ENCODE measurements at regions of chr7 and their contacts with region 1.

Region 1: GRCh38 chr7:121337398-121337797 is 8.6 kb downstream of the WNT16 start:
- DNase-seq: peak; percentile 50
- ATAC-seq: peak; percentile 65
- H3K4me3 ChIP-seq: no peak overlapping the region
- H3K4me3 Mint-ChIP-seq: no peak overlapping the region
- H3K27ac ChIP-seq: peak overlapping the region in 1 of 2 donors; percentile 24
- H3K27ac Mint-ChIP-seq: peak overlapping the region; percentile 46
- H3K4me1 ChIP-seq: no peaks in the 10 kb centered on the region
- H3K4me1 Mint-ChIP-seq: peaks cover 18% of the 10 kb centered on the region
- H3K27me3 ChIP-seq: no peaks in the 10 kb centered on the region
- H3K27me3 Mint-ChIP-seq: no peaks in the 10 kb centered on the region
- CTCF ChIP-seq: peak; percentile 35

Region 2: GRCh38 chr7:121107923-121108498 is 229.4 kb before region 1 on chr7:
- CTCF ChIA-PET with region 1: interaction called, 12 read pairs
- POLR2A ChIA-PET with region 1: no interaction called
- intact Hi-C with region 1: no loop called
- DNase-seq: peak; percentile 67
- ATAC-seq: peak; percentile 78
- H3K4me3 ChIP-seq: no peak overlapping the region
- H3K4me3 Mint-ChIP-seq: no peak overlapping the region
- H3K27ac ChIP-seq: no peak overlapping the region
- H3K27ac Mint-ChIP-seq: no peak overlapping the region
- H3K4me1 ChIP-seq: no peaks in the 10 kb centered on the region
- H3K4me1 Mint-ChIP-seq: no peaks in the 10 kb centered on the region
- H3K27me3 ChIP-seq: no peaks in the 10 kb centered on the region
- H3K27me3 Mint-ChIP-seq: no peaks in the 10 kb centered on the region
- CTCF ChIP-seq: peak; percentile 98

Region 3: DNA sequence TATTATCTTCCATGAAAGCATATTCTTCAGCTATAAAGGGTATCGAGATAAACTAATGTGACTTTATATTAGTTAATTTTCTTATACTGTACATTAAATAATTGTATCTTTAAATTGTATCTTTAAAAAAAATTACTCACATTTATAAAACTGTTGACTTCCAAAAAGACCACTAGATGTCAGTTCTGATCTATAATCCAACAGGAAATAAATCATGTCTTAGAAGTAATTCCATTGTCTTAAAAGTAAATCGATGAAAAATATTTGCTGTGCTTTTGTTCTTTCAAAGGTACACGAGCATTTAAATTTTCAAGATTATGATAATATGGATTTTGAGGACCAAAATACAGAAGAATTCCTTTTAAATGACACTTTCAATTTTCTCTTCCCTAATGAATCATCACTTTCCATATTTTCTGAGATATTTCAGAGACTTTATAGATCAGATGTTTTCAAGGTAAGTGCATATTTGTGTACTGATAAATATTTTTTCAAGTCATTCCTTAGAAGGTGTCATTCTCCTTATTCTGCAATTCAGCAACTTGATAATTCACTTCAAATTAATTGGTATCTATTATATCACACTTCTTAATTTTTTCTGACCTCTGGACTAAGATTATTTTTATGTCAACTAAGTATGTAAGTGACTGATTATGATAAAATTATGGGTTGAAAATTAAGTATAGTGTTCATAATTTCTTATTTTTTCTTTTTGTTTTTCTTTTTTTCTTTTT is 210.4 kb before region 1 on chr7:
- CTCF ChIA-PET with region 1: interaction called, 22 read pairs
- POLR2A ChIA-PET with region 1: no interaction called
- intact Hi-C with region 1: loop called (anchors 1 kb)
- DNase-seq: peak; percentile 51
- ATAC-seq: no peak
- H3K4me3 ChIP-seq: no peak overlapping the region
- H3K4me3 Mint-ChIP-seq: no peak overlapping the region
- H3K27ac ChIP-seq: no peak overlapping the region
- H3K27ac Mint-ChIP-seq: no peak overlapping the region
- H3K4me1 ChIP-seq: peaks cover 0 to 15% of the 10 kb centered on the region in 2 donors
- H3K4me1 Mint-ChIP-seq: peaks cover 9% of the 10 kb centered on the region
- H3K27me3 ChIP-seq: no peaks in the 10 kb centered on the region
- H3K27me3 Mint-ChIP-seq: no peaks in the 10 kb centered on the region
- CTCF ChIP-seq: peak; percentile 74

Region 4: DNA sequence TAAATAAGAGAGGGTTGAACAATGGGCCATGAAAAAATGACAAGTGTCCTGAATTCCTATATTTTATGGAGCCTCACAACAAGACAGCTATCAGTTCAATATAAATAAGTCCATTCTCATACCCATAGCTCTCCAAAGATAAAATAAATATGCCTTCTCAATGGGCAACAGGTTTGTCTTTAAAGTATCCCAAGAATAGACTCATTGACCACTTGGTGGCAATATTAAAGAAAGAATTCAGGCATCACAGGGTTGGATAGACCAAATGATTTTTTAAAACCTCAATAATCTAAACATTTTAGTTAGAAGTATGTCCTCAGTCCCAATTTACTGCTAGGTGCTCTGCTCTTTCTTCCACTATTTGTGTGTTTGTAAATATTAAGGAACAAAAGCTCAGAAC is 173.7 kb before region 1 on chr7:
- CTCF ChIA-PET with region 1: interaction called, 24 read pairs
- POLR2A ChIA-PET with region 1: no interaction called
- intact Hi-C with region 1: loop called (anchors 1 kb)
- DNase-seq: no peak
- ATAC-seq: peak; percentile 28
- H3K4me3 ChIP-seq: no peak overlapping the region
- H3K4me3 Mint-ChIP-seq: no peak overlapping the region
- H3K27ac ChIP-seq: no peak overlapping the region
- H3K27ac Mint-ChIP-seq: peak overlapping the region; percentile 81
- H3K4me1 ChIP-seq: peaks cover 27 to 35% of the 10 kb centered on the region in 2 donors
- H3K4me1 Mint-ChIP-seq: peaks cover 42% of the 10 kb centered on the region
- H3K27me3 ChIP-seq: no peaks in the 10 kb centered on the region
- H3K27me3 Mint-ChIP-seq: no peaks in the 10 kb centered on the region
- CTCF ChIP-seq: no peak

Region 5: DNA sequence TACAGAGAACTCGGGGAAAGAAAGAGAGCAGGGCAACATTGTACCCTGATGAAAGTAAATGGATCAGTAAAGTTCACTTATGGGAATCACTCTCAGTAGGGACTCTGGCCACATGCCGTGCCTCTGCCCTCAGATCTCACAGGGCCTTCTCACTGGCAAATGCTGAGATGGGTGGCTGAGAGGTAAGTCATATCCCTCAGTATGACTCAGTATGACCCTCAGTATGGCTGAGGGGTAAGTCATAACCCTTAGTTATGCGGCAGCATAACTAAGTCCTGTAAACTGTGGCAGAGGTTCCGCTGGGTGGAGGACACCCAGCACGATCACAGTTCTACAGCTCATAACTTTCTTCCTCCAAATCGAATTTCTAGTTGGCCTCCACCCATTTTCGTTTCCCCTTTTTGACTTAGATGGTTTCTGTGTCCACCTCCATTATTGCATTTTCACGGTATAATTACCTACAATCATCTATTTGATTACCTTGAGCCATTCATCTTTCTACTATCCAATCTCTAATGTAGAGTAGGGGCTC is 35.1 kb before region 1 on chr7:
- CTCF ChIA-PET with region 1: no interaction called
- POLR2A ChIA-PET with region 1: no interaction called
- intact Hi-C with region 1: no loop called
- DNase-seq: peak; percentile 68
- ATAC-seq: peak; percentile 88
- H3K4me3 ChIP-seq: peak overlapping the region in 1 of 5 experiments; percentile 19
- H3K4me3 Mint-ChIP-seq: peak overlapping the region; percentile 50
- H3K27ac ChIP-seq: peak overlapping the region; percentile 68 to 74
- H3K27ac Mint-ChIP-seq: peak overlapping the region; percentile 87
- H3K4me1 ChIP-seq: peaks cover 24 to 26% of the 10 kb centered on the region in 2 donors
- H3K4me1 Mint-ChIP-seq: peaks cover 50% of the 10 kb centered on the region
- H3K27me3 ChIP-seq: no peaks in the 10 kb centered on the region
- H3K27me3 Mint-ChIP-seq: no peaks in the 10 kb centered on the region
- CTCF ChIP-seq: no peak

Region 6: GRCh38 chr7:121624958-121625357 is 287.6 kb after region 1 on chr7:
- CTCF ChIA-PET with region 1: no interaction called
- POLR2A ChIA-PET with region 1: no interaction called
- intact Hi-C with region 1: no loop called
- DNase-seq: no peak
- ATAC-seq: no peak
- H3K4me3 ChIP-seq: no peak overlapping the region
- H3K4me3 Mint-ChIP-seq: no peak overlapping the region
- H3K27ac ChIP-seq: no peak overlapping the region
- H3K27ac Mint-ChIP-seq: no peak overlapping the region
- H3K4me1 ChIP-seq: no peaks in the 10 kb centered on the region
- H3K4me1 Mint-ChIP-seq: no peaks in the 10 kb centered on the region
- H3K27me3 ChIP-seq: no peaks in the 10 kb centered on the region
- H3K27me3 Mint-ChIP-seq: peaks cover 3% of the 10 kb centered on the region
- CTCF ChIP-seq: no peak

Measured in B cell (primary cell).